ENCODE measurements at regions of chr5 and their contacts with region 1.

Region 1: GRCh38 chr5:95646554-95647431 is at the start of gene RFESD:
- DNase-seq: peak; percentile 86
- ATAC-seq: peak; percentile 97
- H3K4me3 ChIP-seq: peak within 1 kb of the TSS; percentile 53 to 54
- H3K27ac ChIP-seq: peak within 1 kb of the TSS; percentile 95
- H3K4me1 ChIP-seq: peaks cover 20% of the 10 kb centered on the region
- H3K27me3 ChIP-seq: no peaks in the 10 kb centered on the region
- CTCF ChIP-seq: no peak; the same call in 1 of the 2 replicates
- total RNA-seq, gene RFESD: 2.2 TPM

Region 2: GRCh38 chr5:95730730-95731570 is 84.2 kb after region 1 on chr5 and contains the start of gene RHOBTB3:
- CTCF ChIA-PET with region 1: no interaction called
- POLR2A ChIA-PET with region 1: interaction called, 4 read pairs
- in situ Hi-C with region 1: no loop called
- intact Hi-C with region 1: loop called (anchors 5 kb)
- DNase-seq: no peak
- ATAC-seq: peak; percentile 89
- H3K4me3 ChIP-seq: peak within 1 kb of the TSS; percentile 92 to 95
- H3K27ac ChIP-seq: peak within 1 kb of the TSS; percentile 98
- H3K4me1 ChIP-seq: peaks cover 62% of the 10 kb centered on the region
- H3K27me3 ChIP-seq: no peaks in the 10 kb centered on the region
- CTCF ChIP-seq: no peak; the same call in 1 of the 2 replicates
- total RNA-seq, gene RHOBTB3: 95.2 TPM

Region 3: GRCh38 chr5:95781101-95781583 is 134.3 kb after region 1 on chr5:
- CTCF ChIA-PET with region 1: interaction called, 4 read pairs
- POLR2A ChIA-PET with region 1: no interaction called
- in situ Hi-C with region 1: no loop called
- intact Hi-C with region 1: loop called (anchors 1 kb)
- DNase-seq: peak; percentile 73
- ATAC-seq: peak; percentile 98
- H3K4me3 ChIP-seq: no peak overlapping the region
- H3K27ac ChIP-seq: no peak overlapping the region
- H3K4me1 ChIP-seq: no peaks in the 10 kb centered on the region
- H3K27me3 ChIP-seq: no peaks in the 10 kb centered on the region
- CTCF ChIP-seq: peak; percentile 94

Region 4: GRCh38 chr5:95846554-95847260 is 199.9 kb after region 1 on chr5:
- CTCF ChIA-PET with region 1: no interaction called
- POLR2A ChIA-PET with region 1: no interaction called
- in situ Hi-C with region 1: no loop called
- intact Hi-C with region 1: loop called (anchors 1 kb)
- DNase-seq: no peak
- ATAC-seq: peak; percentile 91
- H3K4me3 ChIP-seq: no peak overlapping the region
- H3K27ac ChIP-seq: no peak overlapping the region
- H3K4me1 ChIP-seq: no peaks in the 10 kb centered on the region
- H3K27me3 ChIP-seq: no peaks in the 10 kb centered on the region; the same call in 1 of the 2 replicates
- CTCF ChIP-seq: peak; percentile 93